HEK293T (cell line): ENCODE measurements at regions of chr1 and their contacts with region 1.

Region 1: DNA sequence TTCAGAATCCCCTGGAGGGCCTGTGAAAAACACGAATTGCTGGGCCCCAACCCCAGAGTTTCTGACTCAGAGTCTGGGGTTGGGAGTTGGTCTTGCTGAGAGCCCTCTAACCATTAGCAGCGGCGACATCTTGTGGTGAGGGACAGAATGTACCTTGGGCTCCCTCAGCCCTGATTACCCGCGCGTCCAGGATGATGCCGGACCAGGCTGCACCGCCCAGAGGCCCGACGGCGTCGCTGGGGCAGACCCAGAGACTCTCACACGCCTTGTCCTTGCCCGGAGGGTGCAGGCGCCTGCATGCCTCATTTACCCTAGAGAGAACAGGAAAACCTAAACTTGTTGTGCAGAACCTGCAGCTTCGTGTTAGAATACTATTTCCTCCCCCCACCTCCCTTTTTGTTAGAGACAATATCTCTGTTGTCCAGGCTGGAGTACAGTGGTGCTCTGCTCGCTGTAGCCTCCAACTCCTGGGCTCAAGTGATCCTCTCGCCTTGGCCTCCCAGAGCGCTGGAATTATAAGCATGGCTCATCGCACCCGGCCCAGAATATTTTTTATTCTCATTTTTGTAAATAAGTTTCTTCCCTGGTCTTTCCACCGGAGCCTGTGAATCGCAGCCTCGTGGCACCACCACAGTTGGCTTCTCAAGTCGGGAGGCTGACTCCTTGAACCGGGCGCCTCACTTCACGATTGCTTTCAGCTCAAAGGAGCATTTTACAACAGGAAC is 22.2 kb upstream of the RD3 start:
- DNase-seq: peak; percentile 95

Region 2: GRCh38 chr1:211323156-211324063 is 190.8 kb before region 1 on chr1:
- CTCF ChIA-PET with region 1: interaction called, 13 read pairs
- POLR2A ChIA-PET with region 1: no interaction called
- DNase-seq: peak; percentile 78

Region 3: DNA sequence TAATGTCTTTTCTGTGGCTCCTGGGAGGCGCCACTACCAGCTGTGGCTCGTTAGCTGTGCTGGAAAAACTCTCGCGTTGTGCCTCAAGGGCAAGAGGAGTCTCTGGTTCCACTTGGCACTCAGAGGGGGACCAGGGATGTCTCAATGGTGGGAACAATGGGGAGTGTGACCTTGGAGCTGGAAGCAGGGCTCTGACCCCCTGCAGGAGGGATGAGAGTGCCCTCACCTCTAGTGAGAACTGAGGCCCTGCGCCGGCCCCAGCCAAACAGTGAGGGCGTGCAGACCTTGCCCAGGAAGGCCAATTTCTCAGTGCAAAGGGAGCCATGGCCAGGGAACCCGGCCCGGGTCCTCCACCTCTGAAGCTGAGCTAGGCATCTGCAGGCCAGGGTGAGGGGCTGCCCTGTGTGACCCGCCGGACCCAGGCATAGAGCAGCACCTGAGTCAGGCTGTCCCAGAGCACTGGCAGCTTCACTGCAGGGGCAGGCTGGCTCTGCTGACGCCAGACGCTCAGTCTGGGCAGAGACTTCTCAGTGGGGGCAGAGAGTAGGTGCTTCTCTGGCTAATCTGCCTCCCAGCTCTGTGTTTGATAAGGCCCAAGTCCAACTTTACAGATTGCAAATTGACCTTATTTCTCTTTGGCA is 24.0 kb before region 1 on chr1:
- CTCF ChIA-PET with region 1: no interaction called
- POLR2A ChIA-PET with region 1: no interaction called
- DNase-seq: no peak

Region 4: GRCh38 chr1:211501711-211502400 is 12.3 kb before region 1 on chr1:
- CTCF ChIA-PET with region 1: interaction called, 11 read pairs
- POLR2A ChIA-PET with region 1: no interaction called
- DNase-seq: no peak

Region 5: DNA sequence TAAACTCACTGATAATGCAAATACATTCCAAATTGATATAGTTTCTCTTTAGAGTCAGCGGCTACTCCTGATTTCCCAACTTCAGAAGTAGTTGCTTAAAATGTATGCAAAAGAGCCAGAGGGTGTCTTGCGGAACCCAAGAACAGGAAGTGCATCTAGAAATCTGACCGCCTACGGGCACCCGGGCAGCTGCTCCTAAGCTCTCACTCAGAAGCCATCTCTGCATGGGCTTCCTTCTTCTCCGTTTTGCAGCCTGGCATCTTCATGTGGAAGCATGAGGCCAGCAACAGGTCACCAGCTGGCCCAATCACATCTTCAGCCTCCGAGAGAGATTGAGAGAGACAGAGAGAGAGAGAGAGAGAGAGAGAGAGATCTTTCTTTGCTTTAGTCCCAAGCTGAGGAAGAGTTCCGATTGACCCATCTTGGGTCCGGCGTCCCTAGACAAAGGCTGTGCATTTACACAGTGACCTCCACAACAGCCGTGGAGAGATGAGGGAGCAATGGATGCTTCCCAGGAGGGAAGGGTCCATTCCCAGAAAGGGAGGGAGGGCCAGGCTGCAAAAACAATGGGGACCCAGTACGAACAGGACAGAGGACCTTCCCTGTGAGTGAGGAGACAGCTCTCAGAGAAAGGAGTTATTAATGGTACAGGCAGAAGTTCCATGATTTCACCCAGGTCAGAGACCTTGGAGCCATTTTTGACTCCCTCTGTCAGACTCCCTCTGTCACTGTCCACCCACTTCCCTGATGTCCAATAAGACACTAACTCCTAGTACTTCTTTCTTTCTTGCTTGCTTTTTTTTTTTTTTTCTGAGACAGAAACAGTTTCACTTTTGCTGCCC is 92.9 kb after region 1 on chr1:
- CTCF ChIA-PET with region 1: no interaction called
- POLR2A ChIA-PET with region 1: no interaction called
- DNase-seq: no peak

Region 6: GRCh38 chr1:211654838-211655787 is 140.9 kb after region 1 on chr1:
- CTCF ChIA-PET with region 1: interaction called, 19 read pairs
- POLR2A ChIA-PET with region 1: interaction called, 3 read pairs
- DNase-seq: peak; percentile 90